Posterior cingulate gyrus (tissue), 11 donors: ENCODE measurements at regions of chr10 and their contacts with region 1.

Region 1: DNA sequence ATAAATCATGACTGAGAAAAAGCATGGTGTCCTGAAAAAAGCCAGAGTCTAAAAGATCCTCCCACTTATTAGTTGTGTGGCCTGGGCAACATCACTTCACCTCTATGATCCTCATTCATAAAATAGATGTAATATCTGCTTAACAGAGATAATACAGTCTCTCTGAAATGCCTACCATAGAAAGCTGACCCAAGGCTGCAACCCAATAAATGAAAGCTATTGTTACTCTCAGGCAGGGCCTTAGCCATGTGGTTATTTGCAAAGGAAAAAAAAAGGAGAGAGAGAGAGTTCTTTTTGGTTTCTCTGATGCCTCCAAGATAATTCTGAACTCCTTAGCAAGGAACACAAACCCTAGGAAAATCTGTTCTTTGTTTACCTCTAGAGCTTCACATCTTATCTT is 7.9 kb downstream of the FAM13C start:
- DNase-seq: no peak

Region 2: DNA sequence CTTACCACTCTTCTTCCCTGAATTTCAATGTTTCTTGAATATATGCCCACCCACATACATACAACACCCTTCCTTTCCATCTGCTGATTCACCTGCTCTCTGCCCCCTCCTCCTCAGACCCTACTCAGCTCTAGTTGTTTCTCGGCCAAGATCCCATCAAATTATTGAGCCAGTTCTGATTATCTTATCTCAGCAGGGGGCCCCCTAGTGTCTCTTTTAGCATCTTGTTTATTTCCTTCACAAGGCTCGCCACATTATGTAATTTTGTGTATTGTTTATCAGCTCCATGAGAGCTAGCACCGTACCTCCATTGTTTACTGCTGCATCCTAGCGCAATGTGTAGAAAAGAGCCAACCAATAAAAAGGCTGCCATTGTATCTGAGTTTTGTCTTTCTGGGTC is 64.0 kb before region 1 on chr10:
- intact Hi-C with region 1: loop called (anchors 10 kb)
- DNase-seq: no peak